GM23248 (cell line): ENCODE measurements at regions of chr11 and their contacts with region 1.

Region 1: GRCh38 chr11:19071255-19071654 is 10.7 kb upstream of the MRGPRX2 start:
- DNase-seq: peak; percentile 94
- H3K4me3 ChIP-seq: peak overlapping the region; percentile 62
- H3K27ac ChIP-seq: no peak overlapping the region
- H3K4me1 ChIP-seq: no peaks in the 10 kb centered on the region
- H3K27me3 ChIP-seq: peaks cover 25% of the 10 kb centered on the region

Region 2: DNA sequence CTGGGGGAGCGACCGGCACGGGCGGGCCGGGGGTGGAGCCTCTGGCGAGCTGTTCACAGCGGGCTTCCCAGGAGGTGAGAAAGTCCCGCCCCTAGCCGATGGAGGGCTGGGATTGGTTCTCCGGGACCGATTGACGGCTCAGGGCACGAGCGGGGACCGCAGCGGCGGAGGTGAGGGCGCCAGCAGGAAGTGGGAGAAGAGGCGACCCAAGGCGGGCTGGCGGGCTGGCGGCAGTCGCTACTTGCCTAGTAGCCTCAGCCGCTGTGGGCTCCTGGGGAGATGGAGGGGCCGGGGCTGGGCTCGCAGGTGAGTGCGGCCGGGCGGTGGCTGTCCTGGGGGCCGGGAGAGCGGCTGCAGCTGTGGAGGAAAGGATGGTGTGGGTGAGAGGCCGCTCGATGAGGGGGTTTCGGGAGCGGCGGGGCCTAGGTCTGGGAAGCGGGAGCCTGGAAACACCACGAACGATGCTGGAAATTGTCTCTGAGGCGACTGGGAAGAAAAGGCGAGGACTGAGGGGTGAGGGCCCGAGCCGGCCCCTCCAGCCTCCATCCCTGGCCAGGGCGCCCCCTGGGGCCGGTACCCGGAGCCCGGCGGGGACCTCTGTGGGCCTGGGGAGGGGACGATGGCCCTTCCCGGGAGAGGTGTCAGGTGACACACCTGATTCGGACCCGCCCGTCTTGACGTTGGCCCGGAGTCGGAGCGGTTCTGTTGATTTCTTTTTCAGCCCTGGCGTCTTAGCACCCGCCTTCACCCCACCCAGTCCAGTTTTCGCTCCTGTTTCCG is 45.9 kb after region 1 on chr11 and contains the start of gene ZDHHC13:
- in situ Hi-C with region 1: no loop called
- DNase-seq: peak; percentile 91
- H3K4me3 ChIP-seq: peak within 1 kb of the TSS; percentile 80
- H3K27ac ChIP-seq: no peak within 1 kb of the TSS
- H3K4me1 ChIP-seq: peaks cover 6% of the 10 kb centered on the region; the same call in 1 of the 2 replicates
- H3K27me3 ChIP-seq: peaks cover 6% of the 10 kb centered on the region; the same call in 1 of the 2 replicates
- total RNA-seq, gene ZDHHC13: 10.9 and 11.0 TPM in 2 replicates

Region 3: GRCh38 chr11:19187114-19187832 is 116.0 kb after region 1 on chr11:
- in situ Hi-C with region 1: no loop called
- DNase-seq: peak; percentile 33
- H3K4me3 ChIP-seq: no peak overlapping the region
- H3K27ac ChIP-seq: no peak overlapping the region
- H3K4me1 ChIP-seq: no peaks in the 10 kb centered on the region
- H3K27me3 ChIP-seq: 0 out of 2 replicates have a peak, but pooled peaks cover 7% of the 10 kb centered on the region

Region 4: GRCh38 chr11:19311308-19312030 is 240.2 kb after region 1 on chr11:
- in situ Hi-C with region 1: loop called (anchors 10 kb)
- DNase-seq: peak; percentile 72
- H3K4me3 ChIP-seq: no peak overlapping the region
- H3K27ac ChIP-seq: no peak overlapping the region
- H3K4me1 ChIP-seq: no peaks in the 10 kb centered on the region
- H3K27me3 ChIP-seq: 0 out of 2 replicates have a peak, but pooled peaks cover 10% of the 10 kb centered on the region

Region 5: GRCh38 chr11:19546325-19546724 is 475.1 kb after region 1 on chr11:
- in situ Hi-C with region 1: loop called (anchors 10 kb)
- DNase-seq: peak; percentile 64
- H3K4me3 ChIP-seq: no peak overlapping the region
- H3K27ac ChIP-seq: no peak overlapping the region
- H3K4me1 ChIP-seq: no peaks in the 10 kb centered on the region
- H3K27me3 ChIP-seq: no peaks in the 10 kb centered on the region

Region 6: GRCh38 chr11:19628018-19628417 is 556.8 kb after region 1 on chr11:
- in situ Hi-C with region 1: no loop called
- DNase-seq: peak; percentile 98
- H3K4me3 ChIP-seq: no peak overlapping the region
- H3K27ac ChIP-seq: peak overlapping the region; percentile 86
- H3K4me1 ChIP-seq: peaks cover 37% of the 10 kb centered on the region
- H3K27me3 ChIP-seq: no peaks in the 10 kb centered on the region

Region 7: GRCh38 chr11:20158597-20159257 is 1087.5 kb after region 1 on chr11:
- in situ Hi-C with region 1: loop called (anchors 25 kb)
- DNase-seq: peak; percentile 77
- H3K4me3 ChIP-seq: no peak overlapping the region
- H3K27ac ChIP-seq: no peak overlapping the region
- H3K4me1 ChIP-seq: peaks cover 7% of the 10 kb centered on the region; the same call in 1 of the 2 replicates
- H3K27me3 ChIP-seq: peaks cover 90% of the 10 kb centered on the region